Ovary (tissue), 10 donors: ENCODE measurements at regions of chr6 and their contacts with region 1.

Region 1: DNA sequence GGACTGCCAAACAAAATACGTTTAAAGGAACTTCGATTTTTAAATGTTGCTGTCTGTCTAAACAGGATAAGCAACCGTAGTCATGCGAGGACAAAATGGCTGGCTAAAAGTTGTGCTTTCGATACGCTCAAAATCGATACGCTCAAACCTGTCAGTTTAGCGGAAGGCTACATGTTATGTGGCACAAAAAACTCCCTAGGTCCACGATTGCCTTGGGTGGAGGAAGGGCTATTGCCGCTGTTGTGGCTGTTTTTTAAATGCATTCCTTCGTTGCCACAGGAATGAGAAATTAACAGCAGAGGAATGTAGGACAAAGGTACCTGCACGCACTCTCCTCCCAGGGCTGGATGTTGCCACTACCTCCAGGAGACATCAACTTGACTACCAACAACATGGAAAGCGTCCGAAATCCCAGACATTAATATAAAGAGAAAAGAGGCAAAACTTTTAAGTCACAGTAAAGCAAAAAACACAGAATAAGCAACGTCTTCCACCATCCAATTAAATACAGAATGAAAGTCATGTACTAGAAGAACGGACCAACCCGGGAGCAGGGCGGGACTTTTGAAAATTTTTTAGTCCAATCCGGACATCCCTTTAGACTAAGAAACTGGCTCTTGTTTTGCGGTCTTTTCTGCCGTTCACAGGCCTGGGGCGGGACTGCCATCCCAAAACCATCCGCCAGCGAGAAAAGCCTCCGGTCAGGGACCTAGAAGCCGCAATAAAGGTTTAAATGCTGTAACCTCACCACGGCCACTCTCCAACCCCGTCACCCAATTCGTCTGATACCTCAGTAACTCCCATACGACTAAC is 32.2 kb upstream of the HFE start:
- DNase-seq: peak; percentile 83 to 92 (median 86)
- H3K4me3 ChIP-seq: peak overlapping the region; percentile 81
- H3K27ac ChIP-seq: peak overlapping the region; percentile 78 to 90
- H3K4me1 ChIP-seq: peaks cover 2% of the 10 kb centered on the region
- H3K27me3 ChIP-seq: no peaks in the 10 kb centered on the region
- CTCF ChIP-seq: peak in 2 of 3 donors; percentile 49 to 62
- EP300 ChIP-seq: no peak
- POLR2A ChIP-seq: peak; percentile 55

Region 2: GRCh38 chr6:26122793-26123674 is 68.0 kb after region 1 on chr6:
- intact Hi-C with region 1: loop called in 1 of 4 experiments (anchors 5 kb)
- DNase-seq: peak; percentile 83 to 92 (median 90)
- H3K4me3 ChIP-seq: peak overlapping the region; percentile 90
- H3K27ac ChIP-seq: peak overlapping the region; percentile 0 to 93
- H3K4me1 ChIP-seq: peaks cover 3% of the 10 kb centered on the region
- H3K27me3 ChIP-seq: no peaks in the 10 kb centered on the region
- CTCF ChIP-seq: peak in 2 of 3 donors; percentile 5 to 15
- EP300 ChIP-seq: peak; percentile 90
- POLR2A ChIP-seq: peak; percentile 66

Region 3: GRCh38 chr6:26156076-26156849 is 101.2 kb after region 1 on chr6:
- intact Hi-C with region 1: loop called in 1 of 4 experiments (anchors 5 kb)
- DNase-seq: peak; percentile 90 to 96 (median 94)
- H3K4me3 ChIP-seq: peak overlapping the region; percentile 77
- H3K27ac ChIP-seq: peak overlapping the region; percentile 51 to 98
- H3K4me1 ChIP-seq: no peaks in the 10 kb centered on the region
- H3K27me3 ChIP-seq: no peaks in the 10 kb centered on the region
- CTCF ChIP-seq: peak in 2 of 3 donors; percentile 12 to 17
- EP300 ChIP-seq: no peak
- POLR2A ChIP-seq: peak; percentile 100

Region 4: GRCh38 chr6:26183581-26184366 is 128.7 kb after region 1 on chr6:
- intact Hi-C with region 1: loop called in 1 of 4 experiments (anchors 10 kb)
- DNase-seq: peak; percentile 69 to 81 (median 75)
- H3K4me3 ChIP-seq: peak overlapping the region; percentile 46
- H3K27ac ChIP-seq: peak overlapping the region; percentile 35 to 89
- H3K4me1 ChIP-seq: peaks cover 2% of the 10 kb centered on the region
- H3K27me3 ChIP-seq: no peaks in the 10 kb centered on the region
- CTCF ChIP-seq: no peak
- EP300 ChIP-seq: no peak
- POLR2A ChIP-seq: peak; percentile 73

Region 5: GRCh38 chr6:26196846-26197648 is 142.0 kb after region 1 on chr6:
- intact Hi-C with region 1: loop called in 1 of 4 experiments (anchors 5 kb)
- DNase-seq: peak; percentile 76 to 85 (median 81)
- H3K4me3 ChIP-seq: peak overlapping the region; percentile 55
- H3K27ac ChIP-seq: peak overlapping the region; percentile 35 to 82
- H3K4me1 ChIP-seq: no peaks in the 10 kb centered on the region
- H3K27me3 ChIP-seq: no peaks in the 10 kb centered on the region
- CTCF ChIP-seq: peak in 1 of 3 donors; percentile 23
- EP300 ChIP-seq: no peak
- POLR2A ChIP-seq: peak; percentile 93